WTC11 (cell line): ENCODE measurements at regions of chr3 and their contacts with region 1.

Region 1: DNA sequence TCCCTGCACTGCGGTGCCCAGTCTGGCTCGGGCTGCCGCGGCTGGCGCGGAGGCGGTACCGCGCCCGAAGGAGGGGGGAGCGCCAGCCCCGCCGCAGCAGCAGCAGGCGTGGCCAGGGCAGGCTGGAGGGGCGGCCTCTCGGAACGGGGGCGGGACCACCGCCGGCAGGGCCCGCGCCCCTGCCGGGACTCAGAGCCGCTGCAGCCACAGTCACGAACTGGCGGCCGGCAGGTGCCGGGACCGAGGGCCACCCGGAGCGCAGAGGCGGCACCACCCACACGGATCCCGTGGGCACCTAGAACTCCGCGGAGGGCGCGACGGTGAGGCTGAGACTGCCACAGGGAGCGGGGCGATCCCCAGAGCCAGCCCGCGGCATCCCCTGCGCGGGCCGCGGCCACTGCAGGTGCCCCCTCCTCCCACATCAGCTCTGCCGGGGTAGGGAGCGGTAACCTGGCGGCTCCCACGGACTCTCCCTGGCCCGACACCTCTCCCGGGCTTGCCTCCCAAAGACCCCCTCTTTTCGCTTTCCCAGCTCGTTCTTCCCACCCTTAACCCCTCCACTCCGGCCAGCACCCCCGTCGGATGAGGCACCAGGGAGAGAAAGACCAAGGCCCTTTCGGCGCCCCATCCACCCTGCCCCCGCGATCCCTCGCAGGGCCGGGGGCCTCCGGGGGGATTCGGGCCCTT is at the start of gene VWA5B2:
- DNase-seq: peak; percentile 78
- ATAC-seq: peak; percentile 91
- H3K4me3 Mint-ChIP-seq: peak within 1 kb of the TSS; percentile 73
- H3K27ac Mint-ChIP-seq: no peak within 1 kb of the TSS
- H3K4me1 Mint-ChIP-seq: peaks cover 8% of the 10 kb centered on the region; the same call in 1 of the 2 replicates
- H3K27me3 Mint-ChIP-seq: peaks cover 75% of the 10 kb centered on the region
- CTCF ChIP-seq: no peak
- total RNA-seq, gene VWA5B2: 0.44 to 0.57 TPM (median 0.55 TPM) in 3 replicates

Region 2: DNA sequence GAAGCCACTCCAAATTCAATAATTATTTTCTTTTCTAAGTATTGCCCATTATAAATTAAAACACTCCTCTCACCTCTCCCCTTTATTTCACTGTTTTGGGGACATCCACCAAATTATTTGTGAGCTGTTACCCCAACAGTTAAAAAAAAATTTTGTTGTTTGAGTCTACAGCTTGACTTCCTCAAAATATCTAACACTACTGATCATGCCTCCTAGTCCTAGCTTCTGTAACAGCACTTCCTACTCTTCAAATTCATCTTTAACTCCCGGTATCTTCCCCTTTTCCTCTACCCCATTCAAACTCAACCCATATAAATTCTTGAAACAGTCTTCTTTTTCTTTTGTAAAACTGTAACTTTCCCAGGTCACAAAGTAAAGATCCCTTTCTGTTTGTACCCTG is 360.7 kb before region 1 on chr3:
- CTCF ChIA-PET with region 1: no interaction called
- POLR2A ChIA-PET with region 1: no interaction called
- DNase-seq: no peak
- ATAC-seq: no peak
- H3K4me3 Mint-ChIP-seq: no peak overlapping the region
- H3K27ac Mint-ChIP-seq: no peak overlapping the region
- H3K4me1 Mint-ChIP-seq: no peaks in the 10 kb centered on the region
- H3K27me3 Mint-ChIP-seq: no peaks in the 10 kb centered on the region
- CTCF ChIP-seq: no peak

Region 3: GRCh38 chr3:184174646-184175492 is 54.7 kb before region 1 on chr3 and contains the start of gene AP2M1:
- CTCF ChIA-PET with region 1: interaction called, 12 read pairs
- POLR2A ChIA-PET with region 1: no interaction called
- DNase-seq: peak; percentile 98
- ATAC-seq: peak; percentile 83
- H3K4me3 Mint-ChIP-seq: peak within 1 kb of the TSS; percentile 97
- H3K27ac Mint-ChIP-seq: peak within 1 kb of the TSS; percentile 98
- H3K4me1 Mint-ChIP-seq: peaks cover 28% of the 10 kb centered on the region
- H3K27me3 Mint-ChIP-seq: no peaks in the 10 kb centered on the region
- CTCF ChIP-seq: no peak
- total RNA-seq, gene AP2M1: 370 to 399 TPM (median 383 TPM) in 3 replicates

Region 4: GRCh38 chr3:184209146-184209923 is 20.2 kb before region 1 on chr3:
- CTCF ChIA-PET with region 1: interaction called, 19 read pairs
- POLR2A ChIA-PET with region 1: interaction called, 5 read pairs
- DNase-seq: no peak
- ATAC-seq: no peak
- H3K4me3 Mint-ChIP-seq: no peak overlapping the region
- H3K27ac Mint-ChIP-seq: no peak overlapping the region
- H3K4me1 Mint-ChIP-seq: no peaks in the 10 kb centered on the region
- H3K27me3 Mint-ChIP-seq: no peaks in the 10 kb centered on the region; the same call in 1 of the 2 replicates
- CTCF ChIP-seq: no peak

Region 5: DNA sequence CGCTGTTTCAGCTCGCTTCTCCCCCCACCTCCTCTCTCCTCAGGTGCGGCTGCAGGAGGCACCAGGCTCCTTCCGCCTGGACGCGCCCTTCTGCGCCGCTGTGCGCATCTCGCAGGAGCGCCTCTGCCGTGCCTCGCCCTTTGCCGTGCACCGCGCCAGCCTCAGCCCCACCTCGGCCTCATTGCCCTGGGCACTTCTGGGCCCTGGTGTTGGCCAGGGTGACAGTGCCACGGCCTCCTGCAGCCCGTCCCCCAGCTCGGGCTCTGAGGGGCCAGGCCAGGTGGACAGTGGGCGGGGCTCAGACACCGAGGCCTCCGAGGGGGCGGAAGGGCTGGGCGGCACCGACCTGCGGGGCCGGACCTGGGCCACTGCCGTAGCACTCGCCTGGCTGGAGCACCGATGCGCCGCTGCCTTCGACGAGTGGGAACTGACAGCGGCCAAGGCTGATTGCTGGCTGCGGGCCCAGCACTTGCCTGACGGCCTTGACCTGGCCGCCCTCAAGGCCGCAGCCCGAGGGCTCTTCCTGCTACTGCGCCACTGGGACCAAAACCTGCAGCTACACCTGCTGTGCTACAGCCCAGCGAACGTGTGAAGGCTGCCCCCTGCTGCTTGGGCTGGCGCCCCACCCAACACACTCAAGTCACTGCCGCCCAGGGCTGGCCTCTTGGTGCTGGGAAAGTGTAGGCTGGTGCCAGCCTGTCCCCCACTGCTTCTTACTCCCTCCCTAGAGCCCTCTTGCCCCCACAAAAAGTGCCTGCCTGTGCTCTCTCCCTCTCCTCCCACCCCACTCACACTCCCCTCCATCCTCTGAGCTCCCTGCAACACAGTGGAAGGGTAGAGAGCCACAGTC is 12.1 kb after region 1 on chr3:
- CTCF ChIA-PET with region 1: interaction called, 88 read pairs
- POLR2A ChIA-PET with region 1: interaction called, 6 read pairs
- DNase-seq: peak; percentile 55
- ATAC-seq: peak; percentile 67
- H3K4me3 Mint-ChIP-seq: peak overlapping the region; percentile 25
- H3K27ac Mint-ChIP-seq: no peak overlapping the region
- H3K4me1 Mint-ChIP-seq: peaks cover 3% of the 10 kb centered on the region; the same call in 1 of the 2 replicates
- H3K27me3 Mint-ChIP-seq: peaks cover 3% of the 10 kb centered on the region
- CTCF ChIP-seq: no peak

Region 6: GRCh38 chr3:184261270-184261853 is 31.8 kb after region 1 on chr3 and contains the start of gene CAMK2N2:
- CTCF ChIA-PET with region 1: interaction called, 23 read pairs
- POLR2A ChIA-PET with region 1: no interaction called
- DNase-seq: peak; percentile 85
- ATAC-seq: peak; percentile 83
- H3K4me3 Mint-ChIP-seq: peak within 1 kb of the TSS; percentile 92
- H3K27ac Mint-ChIP-seq: peak within 1 kb of the TSS; percentile 12; the same call in 1 of the 2 replicates
- H3K4me1 Mint-ChIP-seq: peaks cover 12% of the 10 kb centered on the region
- H3K27me3 Mint-ChIP-seq: peaks cover 75% of the 10 kb centered on the region
- CTCF ChIP-seq: no peak
- total RNA-seq, gene CAMK2N2: 10.5 to 13.1 TPM (median 11.5 TPM) in 3 replicates

Region 7: GRCh38 chr3:184417619-184418327 is 188.2 kb after region 1 on chr3:
- CTCF ChIA-PET with region 1: no interaction called
- POLR2A ChIA-PET with region 1: no interaction called
- DNase-seq: peak; percentile 79
- ATAC-seq: peak; percentile 95
- H3K4me3 Mint-ChIP-seq: no peak overlapping the region
- H3K27ac Mint-ChIP-seq: no peak overlapping the region
- H3K4me1 Mint-ChIP-seq: no peaks in the 10 kb centered on the region; the same call in 1 of the 2 replicates
- H3K27me3 Mint-ChIP-seq: no peaks in the 10 kb centered on the region
- CTCF ChIP-seq: peak; percentile 84

Region 8: DNA sequence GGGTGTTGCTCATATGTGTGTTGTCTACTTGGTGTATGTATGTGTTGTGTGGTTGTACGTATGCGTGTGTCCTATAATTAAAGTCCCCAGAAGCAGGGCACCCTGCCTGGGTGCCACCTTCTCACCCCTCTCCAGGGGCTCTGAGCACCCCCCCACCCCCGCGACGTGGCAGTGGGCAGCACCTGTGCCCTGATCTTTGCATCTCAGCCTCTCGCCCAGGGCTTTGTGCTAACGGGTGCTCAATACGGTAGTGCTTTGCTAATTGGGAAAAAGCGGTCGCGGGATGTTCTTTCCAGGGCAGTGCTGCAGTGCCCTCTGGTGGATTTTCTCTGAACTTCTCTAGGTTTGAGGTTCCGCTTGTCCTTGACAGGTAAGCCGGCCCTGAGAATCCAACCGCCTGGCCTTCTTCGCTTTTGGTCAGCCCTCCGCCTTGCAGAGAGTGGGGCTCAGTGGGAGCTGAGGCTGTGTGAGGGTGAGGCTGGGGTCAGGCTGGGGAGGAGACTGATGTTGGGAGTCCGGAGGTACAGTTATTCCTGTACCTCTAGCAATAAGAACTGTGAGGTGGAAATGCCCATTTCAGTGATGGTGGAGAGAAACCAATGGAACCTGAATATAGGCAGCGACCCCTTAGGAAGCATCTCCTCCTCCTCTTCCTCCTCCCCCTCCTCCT is 314.4 kb after region 1 on chr3:
- CTCF ChIA-PET with region 1: no interaction called
- POLR2A ChIA-PET with region 1: no interaction called
- DNase-seq: peak; percentile 87
- ATAC-seq: peak; percentile 65
- H3K4me3 Mint-ChIP-seq: no peak overlapping the region
- H3K27ac Mint-ChIP-seq: no peak overlapping the region
- H3K4me1 Mint-ChIP-seq: peaks cover 26% of the 10 kb centered on the region
- H3K27me3 Mint-ChIP-seq: peaks cover 6% of the 10 kb centered on the region; the same call in 1 of the 2 replicates
- CTCF ChIP-seq: peak; percentile 86